ENCODE measurements at regions of chr10 and their contacts with region 1.

Region 1: GRCh38 chr10:95363303-95363912 is 72.6 kb upstream of the PDLIM1 start:
- DNase-seq: peak; percentile 84
- ATAC-seq: peak; percentile 81
- H3K4me3 ChIP-seq: no peak overlapping the region
- H3K4me3 Mint-ChIP-seq: no peak overlapping the region
- H3K27ac ChIP-seq: no peak overlapping the region
- H3K27ac Mint-ChIP-seq: no peak overlapping the region
- H3K4me1 ChIP-seq: peaks cover 0 to 4% of the 10 kb centered on the region in 2 donors
- H3K4me1 Mint-ChIP-seq: peaks cover 7% of the 10 kb centered on the region
- H3K27me3 ChIP-seq: no peaks in the 10 kb centered on the region
- H3K27me3 Mint-ChIP-seq: no peaks in the 10 kb centered on the region
- CTCF ChIP-seq: peak; percentile 94

Region 2: GRCh38 chr10:95133016-95133752 is 230.2 kb before region 1 on chr10:
- CTCF ChIA-PET with region 1: interaction called, 14 read pairs
- POLR2A ChIA-PET with region 1: no interaction called
- intact Hi-C with region 1: no loop called
- DNase-seq: peak; percentile 78
- ATAC-seq: peak; percentile 47
- H3K4me3 ChIP-seq: no peak overlapping the region
- H3K4me3 Mint-ChIP-seq: no peak overlapping the region
- H3K27ac ChIP-seq: no peak overlapping the region
- H3K27ac Mint-ChIP-seq: no peak overlapping the region
- H3K4me1 ChIP-seq: no peaks in the 10 kb centered on the region
- H3K4me1 Mint-ChIP-seq: no peaks in the 10 kb centered on the region
- H3K27me3 ChIP-seq: no peaks in the 10 kb centered on the region
- H3K27me3 Mint-ChIP-seq: no peaks in the 10 kb centered on the region
- CTCF ChIP-seq: peak; percentile 90

Region 3: GRCh38 chr10:95208702-95209391 is 154.6 kb before region 1 on chr10:
- CTCF ChIA-PET with region 1: interaction called, 9 read pairs
- POLR2A ChIA-PET with region 1: no interaction called
- intact Hi-C with region 1: loop called (anchors 1 kb)
- DNase-seq: peak; percentile 29
- ATAC-seq: no peak
- H3K4me3 ChIP-seq: no peak overlapping the region
- H3K4me3 Mint-ChIP-seq: no peak overlapping the region
- H3K27ac ChIP-seq: no peak overlapping the region
- H3K27ac Mint-ChIP-seq: no peak overlapping the region
- H3K4me1 ChIP-seq: no peaks in the 10 kb centered on the region
- H3K4me1 Mint-ChIP-seq: no peaks in the 10 kb centered on the region
- H3K27me3 ChIP-seq: no peaks in the 10 kb centered on the region
- H3K27me3 Mint-ChIP-seq: no peaks in the 10 kb centered on the region
- CTCF ChIP-seq: peak; percentile 62

Region 4: DNA sequence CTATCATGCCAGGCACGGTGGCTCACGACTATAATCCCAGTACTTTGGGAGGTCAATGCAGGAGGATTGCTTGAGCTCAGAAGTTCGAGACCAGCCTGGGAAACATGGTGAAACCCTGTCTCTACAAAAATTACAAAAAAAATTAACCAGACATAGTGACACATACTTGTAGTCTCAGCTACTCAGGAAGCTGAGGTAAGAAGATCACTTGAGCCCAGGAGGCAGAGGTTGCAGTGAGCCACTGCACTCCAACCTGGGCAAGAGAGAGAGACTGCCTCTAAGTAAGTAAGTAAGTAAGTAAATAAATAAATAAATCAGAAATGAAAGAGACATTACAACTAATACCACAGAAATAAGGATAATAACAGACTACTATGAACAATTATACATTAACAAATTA is 108.8 kb before region 1 on chr10:
- CTCF ChIA-PET with region 1: interaction called, 644 read pairs
- POLR2A ChIA-PET with region 1: no interaction called
- intact Hi-C with region 1: no loop called
- DNase-seq: no peak
- ATAC-seq: no peak
- H3K4me3 ChIP-seq: no peak overlapping the region
- H3K4me3 Mint-ChIP-seq: no peak overlapping the region
- H3K27ac ChIP-seq: peak overlapping the region in 1 of 2 donors; percentile 23
- H3K27ac Mint-ChIP-seq: peak overlapping the region; percentile 32
- H3K4me1 ChIP-seq: peaks cover 6 to 7% of the 10 kb centered on the region in 2 donors
- H3K4me1 Mint-ChIP-seq: peaks cover 27% of the 10 kb centered on the region
- H3K27me3 ChIP-seq: no peaks in the 10 kb centered on the region
- H3K27me3 Mint-ChIP-seq: no peaks in the 10 kb centered on the region
- CTCF ChIP-seq: no peak

Region 5: DNA sequence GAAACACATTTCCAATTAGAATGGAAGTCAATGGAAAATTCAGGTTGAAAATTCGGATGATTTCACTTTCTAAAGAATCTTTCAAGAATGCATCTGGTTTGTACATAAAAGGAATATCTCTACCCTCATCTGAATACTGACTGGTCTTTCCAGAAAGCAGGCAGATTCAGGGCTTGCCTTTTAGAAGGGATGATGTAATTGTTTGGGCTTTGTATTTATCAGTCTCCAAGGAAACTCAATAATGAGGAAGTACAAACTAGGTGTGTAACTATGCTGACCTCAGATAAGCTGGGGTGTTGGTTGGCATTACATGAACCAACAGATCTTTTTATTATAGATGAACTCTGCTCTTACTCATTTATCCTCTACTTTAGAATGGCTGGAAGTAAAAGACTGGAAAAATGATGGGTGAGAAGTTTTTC is 96.7 kb before region 1 on chr10:
- CTCF ChIA-PET with region 1: interaction called, 38 read pairs
- POLR2A ChIA-PET with region 1: interaction called, 6 read pairs
- intact Hi-C with region 1: no loop called
- DNase-seq: peak; percentile 88
- ATAC-seq: peak; percentile 77
- H3K4me3 ChIP-seq: peak overlapping the region in 1 of 5 experiments; percentile 30
- H3K4me3 Mint-ChIP-seq: peak overlapping the region; percentile 36
- H3K27ac ChIP-seq: peak overlapping the region; percentile 78 to 92
- H3K27ac Mint-ChIP-seq: peak overlapping the region; percentile 97
- H3K4me1 ChIP-seq: peaks cover 28 to 41% of the 10 kb centered on the region in 2 donors
- H3K4me1 Mint-ChIP-seq: peaks cover 53% of the 10 kb centered on the region
- H3K27me3 ChIP-seq: no peaks in the 10 kb centered on the region
- H3K27me3 Mint-ChIP-seq: no peaks in the 10 kb centered on the region
- CTCF ChIP-seq: no peak

Region 6: DNA sequence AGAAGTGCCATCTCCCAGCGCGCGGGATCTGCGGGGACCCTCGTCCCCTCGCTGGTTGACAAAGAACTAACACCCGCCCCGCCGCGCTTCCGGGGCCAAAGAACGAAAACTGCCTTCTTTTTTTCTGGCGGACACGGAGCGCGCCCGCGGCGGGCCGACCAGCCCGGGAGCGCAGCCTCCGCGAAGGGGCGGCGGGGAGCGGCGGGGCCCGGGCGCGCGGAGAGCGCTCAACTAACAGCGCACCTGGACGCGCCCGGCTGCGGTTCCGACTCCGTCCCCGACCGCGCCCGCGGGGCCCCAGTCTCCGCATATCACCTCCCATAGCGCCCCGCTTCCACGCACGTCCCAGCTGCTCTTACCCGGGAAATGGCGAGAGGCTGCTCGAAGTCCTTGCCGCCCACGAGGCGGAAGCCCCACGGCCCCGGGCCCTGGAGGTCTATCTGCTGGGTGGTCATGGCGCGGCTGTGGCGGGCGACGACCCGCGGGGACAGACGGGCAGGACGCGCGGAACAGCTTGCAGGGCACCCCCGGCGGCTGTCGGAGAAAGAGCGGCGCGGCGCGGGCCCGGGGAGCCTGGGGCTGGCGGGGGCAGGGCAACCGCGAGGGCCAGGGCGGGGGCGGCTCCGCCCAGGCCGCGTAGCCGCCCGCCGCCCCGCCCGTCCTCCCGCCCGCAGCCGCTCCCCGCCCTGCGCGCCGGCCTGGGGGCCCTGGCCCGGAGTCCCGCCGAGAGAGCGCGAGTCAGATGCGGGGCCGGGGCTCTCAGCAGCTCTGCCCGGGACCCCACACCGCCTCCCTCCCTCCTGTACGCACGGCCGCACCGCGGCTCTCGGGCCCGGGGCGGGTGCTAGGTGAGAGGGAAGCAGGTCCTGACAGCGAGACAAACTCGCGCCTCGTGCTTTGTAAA is 72.7 kb before region 1 on chr10 and contains the start of gene PDLIM1:
- CTCF ChIA-PET with region 1: interaction called, 60 read pairs
- POLR2A ChIA-PET with region 1: interaction called, 14 read pairs
- intact Hi-C with region 1: loop called (anchors 1 kb)
- DNase-seq: peak; percentile 90
- ATAC-seq: peak; percentile 69
- H3K4me3 ChIP-seq: peak within 1 kb of the TSS; percentile 36 to 94 (median 91)
- H3K4me3 Mint-ChIP-seq: peak within 1 kb of the TSS; percentile 93
- H3K27ac ChIP-seq: peak within 1 kb of the TSS; percentile 89 to 93
- H3K27ac Mint-ChIP-seq: peak within 1 kb of the TSS; percentile 95
- H3K4me1 ChIP-seq: peaks cover 83 to 87% of the 10 kb centered on the region in 2 donors
- H3K4me1 Mint-ChIP-seq: peaks cover 83% of the 10 kb centered on the region
- H3K27me3 ChIP-seq: no peaks in the 10 kb centered on the region
- H3K27me3 Mint-ChIP-seq: no peaks in the 10 kb centered on the region
- CTCF ChIP-seq: peak; percentile 29
- total RNA-seq, gene PDLIM1: 123 and 126 TPM in 2 replicates

Region 7: DNA sequence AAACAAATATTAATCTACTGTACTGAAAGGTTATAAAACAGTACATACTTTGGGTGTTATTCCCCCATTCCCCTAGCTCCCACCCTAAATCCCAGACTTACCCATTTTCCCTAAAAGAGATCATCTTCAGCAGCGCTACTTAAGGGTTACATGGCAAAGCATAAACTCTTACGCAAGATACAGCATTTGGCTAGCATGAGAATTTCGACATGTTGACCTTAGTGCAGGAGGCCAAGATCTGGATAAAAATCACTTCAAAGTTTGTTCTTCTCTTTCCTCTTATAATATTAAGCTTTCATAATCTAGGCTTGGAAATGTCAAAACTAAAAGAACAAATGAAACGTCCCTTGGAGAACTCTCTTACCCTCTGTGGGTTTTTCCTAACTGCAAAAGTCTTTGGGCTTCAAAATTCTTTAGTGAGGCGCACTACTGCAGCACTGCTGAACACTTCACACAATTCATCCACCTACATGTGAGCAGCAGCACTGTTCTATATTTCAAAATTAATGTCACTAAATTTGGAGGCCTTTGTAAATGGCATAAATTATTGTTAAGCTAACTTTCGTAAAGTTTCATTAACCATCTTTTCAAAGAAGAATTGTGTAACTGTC is 13.1 kb before region 1 on chr10:
- CTCF ChIA-PET with region 1: interaction called, 17 read pairs
- POLR2A ChIA-PET with region 1: no interaction called
- intact Hi-C with region 1: no loop called
- DNase-seq: no peak
- ATAC-seq: no peak
- H3K4me3 ChIP-seq: no peak overlapping the region
- H3K4me3 Mint-ChIP-seq: no peak overlapping the region
- H3K27ac ChIP-seq: no peak overlapping the region
- H3K27ac Mint-ChIP-seq: no peak overlapping the region
- H3K4me1 ChIP-seq: peaks cover 8 to 10% of the 10 kb centered on the region in 2 donors
- H3K4me1 Mint-ChIP-seq: peaks cover 12% of the 10 kb centered on the region
- H3K27me3 ChIP-seq: peaks cover 0 to 3% (median 0%) of the 10 kb centered on the region in 4 experiments
- H3K27me3 Mint-ChIP-seq: no peaks in the 10 kb centered on the region
- CTCF ChIP-seq: no peak

Region 8: GRCh38 chr10:95814011-95814727 is 450.8 kb after region 1 on chr10:
- CTCF ChIA-PET with region 1: no interaction called
- POLR2A ChIA-PET with region 1: no interaction called
- intact Hi-C with region 1: no loop called
- DNase-seq: no peak
- ATAC-seq: peak; percentile 45
- H3K4me3 ChIP-seq: no peak overlapping the region
- H3K4me3 Mint-ChIP-seq: peak overlapping the region; percentile 52
- H3K27ac ChIP-seq: no peak overlapping the region
- H3K27ac Mint-ChIP-seq: peak overlapping the region; percentile 28
- H3K4me1 ChIP-seq: peaks cover 27 to 46% of the 10 kb centered on the region in 2 donors
- H3K4me1 Mint-ChIP-seq: peaks cover 67% of the 10 kb centered on the region
- H3K27me3 ChIP-seq: no peaks in the 10 kb centered on the region
- H3K27me3 Mint-ChIP-seq: no peaks in the 10 kb centered on the region
- CTCF ChIP-seq: no peak